ENCODE measurements at regions of chr6 and their contacts with region 1.

Region 1: GRCh38 chr6:109230453-109230852 is 135.1 kb downstream of the CEP57L1 start:
- DNase-seq: no peak
- ATAC-seq: no peak
- H3K4me3 ChIP-seq: no peak overlapping the region
- H3K27ac ChIP-seq: no peak overlapping the region
- H3K4me1 ChIP-seq: no peaks in the 10 kb centered on the region
- H3K27me3 ChIP-seq: no peaks in the 10 kb centered on the region
- CTCF ChIP-seq: no peak
- POLR2A ChIP-seq: no peak

Region 2: GRCh38 chr6:108951351-108951953 is 279.0 kb before region 1 on chr6:
- intact Hi-C with region 1: no loop called
- DNase-seq: no peak
- ATAC-seq: no peak
- H3K4me3 ChIP-seq: no peak overlapping the region
- H3K27ac ChIP-seq: no peak overlapping the region
- H3K4me1 ChIP-seq: peaks cover 5 to 36% (median 25%) of the 10 kb centered on the region in 12 donors
- H3K27me3 ChIP-seq: no peaks in the 10 kb centered on the region
- CTCF ChIP-seq: no peak
- POLR2A ChIP-seq: no peak

Region 3: DNA sequence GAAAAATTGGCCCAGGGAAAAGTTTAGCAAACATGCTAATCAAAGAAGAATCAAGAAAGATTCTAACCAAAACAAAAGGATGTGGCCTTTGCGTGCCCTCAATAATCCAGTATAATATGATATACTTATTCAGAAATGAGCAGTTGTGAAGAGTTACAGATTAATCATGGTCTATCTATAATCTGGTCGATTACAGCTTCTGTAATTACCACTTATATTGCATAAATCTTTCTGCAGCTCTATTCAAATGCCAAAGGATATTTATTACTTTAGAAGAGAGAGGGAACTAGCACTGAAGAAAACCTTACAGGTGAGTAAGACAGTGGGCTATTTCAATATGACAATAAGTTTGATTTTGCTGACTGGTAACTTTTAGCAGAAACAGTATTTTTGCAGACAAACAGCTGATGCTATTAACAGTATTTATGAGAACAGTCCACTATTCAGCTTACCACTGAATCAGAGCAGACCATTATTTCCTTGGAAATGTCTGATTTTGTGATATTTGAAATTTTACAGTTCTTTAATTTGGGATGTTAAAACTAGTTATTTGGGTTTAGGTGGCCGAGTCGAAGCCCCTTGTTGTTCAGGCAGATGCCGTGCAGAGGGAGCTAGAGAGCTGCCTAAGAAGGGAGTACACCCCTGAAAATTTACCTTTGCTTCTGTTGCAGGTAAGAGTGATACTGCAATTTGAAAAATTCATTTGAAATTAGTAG is 42.9 kb before region 1 on chr6:
- intact Hi-C with region 1: loop called in 1 of 10 experiments (anchors 2 kb)
- DNase-seq: peak in 4 of 5 donors; percentile 24 to 63 (median 39)
- ATAC-seq: peak in 3 of 4 donors; percentile 64 to 78 (median 75)
- H3K4me3 ChIP-seq: no peak overlapping the region
- H3K27ac ChIP-seq: no peak overlapping the region
- H3K4me1 ChIP-seq: peaks cover 0 to 5% (median 0%) of the 10 kb centered on the region in 12 donors
- H3K27me3 ChIP-seq: peaks cover 0 to 4% (median 0%) of the 10 kb centered on the region in 9 donors
- CTCF ChIP-seq: peak; percentile 75 to 99 (median 94)
- POLR2A ChIP-seq: no peak

Measured in heart left ventricle (tissue), 16 donors.